Dorsolateral prefrontal cortex (tissue), 120 donors: ENCODE measurements at regions of chr11 and their contacts with region 1.

Region 1: DNA sequence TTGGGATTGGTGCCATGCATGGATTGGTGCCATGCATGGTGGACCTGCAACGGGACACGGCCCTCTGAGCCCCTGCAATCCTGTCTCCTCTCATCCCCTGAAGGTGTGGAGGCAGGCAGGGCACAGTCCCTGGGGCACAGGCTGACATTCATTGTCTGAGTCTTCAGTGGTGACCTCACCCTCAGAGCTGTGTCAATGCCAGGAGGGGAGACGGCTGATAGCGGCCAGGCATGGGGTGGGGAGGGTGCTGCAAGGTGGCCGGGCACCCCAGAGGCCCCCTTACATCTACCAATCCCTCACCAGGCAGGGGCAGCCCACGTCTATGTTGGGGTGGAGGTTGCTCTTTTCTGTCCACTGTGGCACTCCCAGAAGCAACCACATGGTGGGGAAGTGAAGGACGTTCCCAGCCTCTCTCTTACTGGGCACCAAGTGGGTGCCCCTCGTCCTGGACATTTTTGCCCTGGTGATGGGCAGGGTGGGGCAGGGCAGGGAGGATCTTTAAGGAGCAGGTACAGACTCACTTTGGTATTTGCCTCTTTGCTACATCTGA is 47.6 kb downstream of the NECTIN1 start:
- DNase-seq: no peak
- H3K4me3 ChIP-seq: no peak overlapping the region
- H3K27ac ChIP-seq: peak overlapping the region in 51 of 59 donors; percentile 11 to 85 (median 65)
- H3K27me3 ChIP-seq: no peaks in the 10 kb centered on the region
- CTCF ChIP-seq: peak in 38 of 56 donors; percentile 9 to 53 (median 26)

Region 2: GRCh38 chr11:119717839-119718534 is 36.6 kb after region 1 on chr11:
- intact Hi-C with region 1: loop called in 1 of 2 experiments (anchors 2 kb)
- DNase-seq: no peak
- H3K4me3 ChIP-seq: peak overlapping the region in 1 of 59 donors; percentile 33
- H3K27ac ChIP-seq: peak overlapping the region in 31 of 59 donors; percentile 2 to 67 (median 33)
- H3K27me3 ChIP-seq: no peaks in the 10 kb centered on the region
- CTCF ChIP-seq: no peak

Region 3: GRCh38 chr11:119854521-119854920 is 173.1 kb after region 1 on chr11:
- intact Hi-C with region 1: no loop called
- DNase-seq: no peak
- H3K4me3 ChIP-seq: peak overlapping the region in 4 of 59 donors; percentile 12 to 30 (median 22)
- H3K27ac ChIP-seq: no peak overlapping the region
- H3K27me3 ChIP-seq: no peaks in the 10 kb centered on the region
- CTCF ChIP-seq: no peak

Region 4: GRCh38 chr11:119902656-119903231 is 221.3 kb after region 1 on chr11:
- intact Hi-C with region 1: no loop called
- DNase-seq: no peak
- H3K4me3 ChIP-seq: no peak overlapping the region
- H3K27ac ChIP-seq: peak overlapping the region in 8 of 59 donors; percentile 19 to 79 (median 28)
- H3K27me3 ChIP-seq: no peaks in the 10 kb centered on the region
- CTCF ChIP-seq: no peak